ACHN (cell line): ENCODE measurements at regions of chr1 and their contacts with region 1.

Region 1: GRCh38 chr1:43227143-43227764 is 42.5 kb upstream of the TMEM125 start:
- DNase-seq: peak; percentile 70

Region 2: GRCh38 chr1:43021547-43022474 is 205.4 kb before region 1 on chr1:
- in situ Hi-C with region 1: no loop called
- DNase-seq: peak; percentile 50

Region 3: GRCh38 chr1:43389326-43390313 is 162.4 kb after region 1 on chr1 and contains the starts of genes MED8 and SZT2:
- in situ Hi-C with region 1: loop called (anchors 25 kb)
- DNase-seq: peak; percentile 92